GM10248 (cell line): ENCODE measurements at regions of chr5 and their contacts with region 1.

Region 1: DNA sequence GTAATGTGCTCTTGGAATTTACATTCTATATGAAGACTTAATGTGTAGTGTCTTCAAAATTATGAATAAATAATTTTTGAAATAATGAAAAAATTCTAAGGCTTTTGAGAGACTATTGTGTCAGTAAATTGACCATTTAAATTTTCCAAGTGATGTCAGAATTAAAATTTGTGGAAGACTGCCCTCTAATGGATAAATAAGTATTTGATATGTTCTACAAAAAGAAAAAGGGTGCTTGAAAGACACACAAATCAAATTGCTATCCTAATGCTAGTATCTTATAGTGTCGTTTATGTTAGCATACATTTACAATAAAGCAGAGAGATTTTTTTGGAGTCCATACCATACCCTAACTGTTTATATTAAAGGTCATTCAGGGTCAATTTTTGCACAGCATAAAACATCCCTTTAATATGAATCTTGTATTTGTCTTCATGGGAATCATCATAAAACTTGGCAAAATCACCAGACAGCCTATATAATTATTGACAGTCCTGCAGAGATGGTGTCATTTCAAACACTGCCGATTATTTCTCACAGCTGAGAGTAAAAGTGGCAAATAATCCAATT is 120.8 kb upstream of the SLC27A6 start:
- DNase-seq: no peak
- CTCF ChIP-seq: no peak

Region 2: GRCh38 chr5:128825826-128826225 is 18.6 kb before region 1 on chr5:
- CTCF ChIA-PET with region 1: no interaction called
- POLR2A ChIA-PET with region 1: no interaction called
- DNase-seq: no peak
- CTCF ChIP-seq: no peak

Region 3: GRCh38 chr5:128857076-128857677 is 12.7 kb after region 1 on chr5:
- CTCF ChIA-PET with region 1: interaction called, 12 read pairs
- POLR2A ChIA-PET with region 1: no interaction called
- DNase-seq: no peak
- CTCF ChIP-seq: no peak

Region 4: DNA sequence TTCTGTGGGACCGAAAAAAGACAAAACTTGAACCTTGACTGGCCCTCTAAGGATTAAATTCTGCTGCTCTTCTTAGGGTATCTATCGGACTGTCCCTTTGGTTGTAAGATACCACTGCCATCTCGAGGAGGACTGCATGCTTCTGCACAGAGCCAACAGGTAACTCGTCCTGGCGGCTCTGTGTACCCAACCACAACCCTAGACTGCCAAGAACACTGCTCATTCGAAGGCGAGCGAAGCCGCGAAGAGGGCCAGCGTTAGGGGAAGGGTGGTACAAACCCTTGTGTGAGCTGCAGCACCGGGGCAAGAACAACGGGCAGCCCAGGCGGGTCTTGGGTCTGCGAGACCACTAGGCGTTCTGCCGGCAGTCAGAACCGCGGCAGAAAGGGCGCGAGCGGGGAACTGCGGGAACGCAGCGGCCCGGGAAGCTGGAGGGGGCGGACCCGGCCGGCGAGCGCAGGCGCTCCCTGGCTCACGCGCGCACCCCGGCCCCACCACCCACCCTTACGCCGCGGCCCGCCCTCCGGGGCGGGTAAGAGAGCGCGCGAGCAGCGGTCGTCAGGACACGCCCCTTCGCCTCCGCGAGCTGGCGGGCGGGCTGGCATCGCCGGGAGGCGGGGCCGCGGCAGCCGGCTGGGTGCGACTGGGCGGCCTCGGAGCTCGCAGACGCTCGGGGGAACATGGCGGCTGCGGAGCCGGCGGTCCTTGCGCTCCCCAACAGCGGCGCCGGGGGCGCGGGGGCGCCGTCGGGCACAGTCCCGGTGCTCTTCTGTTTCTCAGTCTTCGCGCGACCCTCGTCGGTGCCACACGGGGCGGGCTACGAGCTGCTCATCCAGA is 249.9 kb after region 1 on chr5 and contains the start of gene ISOC1:
- CTCF ChIA-PET with region 1: no interaction called
- POLR2A ChIA-PET with region 1: no interaction called
- DNase-seq: peak; percentile 93
- CTCF ChIP-seq: no peak